ENCODE measurements at regions of chr6 and their contacts with region 1.

Region 1: DNA sequence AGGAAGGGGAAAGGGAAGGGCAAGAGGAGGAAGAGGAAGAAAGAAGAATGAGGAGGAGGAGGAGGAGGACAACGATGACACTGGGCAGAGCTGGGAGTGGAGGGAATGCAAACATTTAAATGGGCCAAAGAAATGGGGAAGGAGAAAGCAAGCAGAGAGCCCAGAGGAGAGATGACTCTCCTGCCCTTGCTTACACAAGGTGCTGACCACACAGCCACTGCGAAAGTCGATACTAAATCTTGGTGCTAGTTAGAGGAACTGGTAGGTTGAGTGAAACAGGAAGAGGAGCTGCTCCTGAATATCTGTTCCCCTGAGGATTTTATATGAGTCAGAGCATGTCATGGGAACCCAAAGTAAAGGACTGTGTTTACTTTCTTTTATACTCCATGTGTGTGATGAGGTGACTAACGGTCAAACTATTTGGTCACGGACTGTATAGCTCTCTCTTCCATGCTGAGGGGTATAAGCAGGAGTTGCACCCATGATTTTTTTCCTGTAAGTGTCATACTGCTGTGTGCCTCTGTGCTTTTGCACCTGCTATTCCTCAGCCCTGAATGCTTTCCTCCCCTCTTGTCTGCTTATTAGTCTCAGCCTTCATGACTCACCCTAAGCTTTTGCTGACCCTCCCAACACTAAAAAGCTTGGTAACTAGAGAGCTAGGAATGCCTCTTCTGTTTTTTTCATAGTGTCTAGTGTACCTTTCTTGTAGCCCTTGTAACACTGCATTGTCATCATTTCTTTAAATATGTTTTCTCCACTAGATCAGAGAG is 9.5 kb upstream of the PAQR8 start:
- DNase-seq: peak; percentile 99
- ATAC-seq: peak; percentile 93
- H3K4me3 ChIP-seq: peak overlapping the region; percentile 20; the same call in 1 of the 2 replicates
- H3K27ac ChIP-seq: peak overlapping the region; percentile 96
- H3K4me1 ChIP-seq: peaks cover 27% of the 10 kb centered on the region
- H3K27me3 ChIP-seq: no peaks in the 10 kb centered on the region
- CTCF ChIP-seq: no peak

Region 2: GRCh38 chr6:52337633-52338290 is 14.7 kb before region 1 on chr6:
- CTCF ChIA-PET with region 1: no interaction called
- POLR2A ChIA-PET with region 1: no interaction called
- intact Hi-C with region 1: loop called (anchors 2 kb)
- DNase-seq: peak; percentile 58
- ATAC-seq: peak; percentile 56
- H3K4me3 ChIP-seq: no peak overlapping the region
- H3K27ac ChIP-seq: peak overlapping the region; percentile 52
- H3K4me1 ChIP-seq: peaks cover 44% of the 10 kb centered on the region
- H3K27me3 ChIP-seq: no peaks in the 10 kb centered on the region
- CTCF ChIP-seq: no peak

Region 3: GRCh38 chr6:52389626-52390360 is 37.4 kb after region 1 on chr6:
- CTCF ChIA-PET with region 1: interaction called, 5 read pairs
- POLR2A ChIA-PET with region 1: interaction called, 15 read pairs
- intact Hi-C with region 1: loop called (anchors 1 kb)
- DNase-seq: peak; percentile 91
- ATAC-seq: peak; percentile 87
- H3K4me3 ChIP-seq: peak overlapping the region; percentile 53
- H3K27ac ChIP-seq: peak overlapping the region; percentile 81
- H3K4me1 ChIP-seq: peaks cover 32% of the 10 kb centered on the region
- H3K27me3 ChIP-seq: no peaks in the 10 kb centered on the region
- CTCF ChIP-seq: peak; percentile 38; the same call in 1 of the 2 replicates

Region 4: DNA sequence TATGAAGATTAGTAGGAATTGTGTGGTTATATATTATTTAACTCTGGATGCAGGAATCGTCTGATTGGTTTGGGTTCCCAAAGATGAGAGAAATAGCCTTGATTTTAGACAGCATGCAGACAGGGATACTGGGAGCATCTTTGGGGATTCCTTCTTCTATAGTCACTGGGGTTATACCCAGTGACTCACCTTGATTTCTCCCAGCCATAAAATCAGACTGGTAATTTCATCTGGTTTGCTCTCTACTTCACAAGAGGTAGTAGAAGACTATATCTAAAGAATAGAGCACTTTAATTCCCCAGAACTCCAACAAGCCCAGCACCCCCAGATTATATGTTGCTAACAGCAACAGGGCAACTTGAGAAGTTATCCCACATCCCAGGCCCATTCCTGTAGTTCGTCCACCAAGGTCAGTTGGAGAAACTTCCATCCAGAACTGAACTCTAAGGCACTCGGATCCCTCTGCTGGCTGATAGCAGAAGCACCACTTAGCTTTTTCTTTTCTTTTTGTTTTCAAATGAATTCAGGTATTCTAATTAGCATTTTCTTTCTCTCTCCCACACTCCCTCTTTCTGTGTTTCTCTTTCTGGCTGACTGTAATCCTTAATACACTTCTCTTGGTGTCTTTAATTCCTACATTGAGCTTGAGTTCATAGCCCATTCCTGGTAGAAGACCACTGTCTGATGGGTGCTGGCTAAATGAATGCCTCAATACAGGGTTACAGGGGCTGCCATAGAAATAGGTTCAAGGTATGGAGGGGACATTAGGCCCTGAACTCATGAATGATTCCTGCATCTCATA is 47.3 kb after region 1 on chr6:
- CTCF ChIA-PET with region 1: no interaction called
- POLR2A ChIA-PET with region 1: no interaction called
- intact Hi-C with region 1: loop called (anchors 1 kb)
- DNase-seq: peak; percentile 72
- ATAC-seq: peak; percentile 83
- H3K4me3 ChIP-seq: no peak overlapping the region
- H3K27ac ChIP-seq: no peak overlapping the region
- H3K4me1 ChIP-seq: peaks cover 14% of the 10 kb centered on the region
- H3K27me3 ChIP-seq: no peaks in the 10 kb centered on the region
- CTCF ChIP-seq: peak; percentile 97

Measured in PC-3 (cell line).